Activated T-helper 2 cell treated with anti-CD3 and anti-CD28 coated beads, Interferon-gamma antibody, Interleukin-2, Interleukin-4, amounts not matched to agents 10 μg/mL and 5 μg/mL and 100 μg/mL, durations not matched to agents 14 hours and 24 hours and 36 hours (primary cell): ENCODE measurements at regions of chr12 and their contacts with region 1.

Region 1: GRCh38 chr12:120725659-120726509 is at the start of gene ACADS:
- DNase-seq: peak; percentile 87
- H3K4me3 Mint-ChIP-seq: peak within 1 kb of the TSS; percentile 96
- H3K27ac Mint-ChIP-seq: peak within 1 kb of the TSS; percentile 79
- H3K4me1 Mint-ChIP-seq: peaks cover 20% of the 10 kb centered on the region
- H3K27me3 Mint-ChIP-seq: no peaks in the 10 kb centered on the region
- total RNA-seq, gene ACADS: 16.4 and 16.6 TPM in 2 replicates

Region 2: GRCh38 chr12:120710031-120710804 is 15.7 kb before region 1 on chr12 and contains the start of gene UNC119B:
- intact Hi-C with region 1: loop called (anchors 1 kb)
- DNase-seq: peak; percentile 66
- H3K4me3 Mint-ChIP-seq: peak within 1 kb of the TSS; percentile 88
- H3K27ac Mint-ChIP-seq: peak within 1 kb of the TSS; percentile 82
- H3K4me1 Mint-ChIP-seq: peaks cover 29% of the 10 kb centered on the region
- H3K27me3 Mint-ChIP-seq: no peaks in the 10 kb centered on the region
- total RNA-seq, gene UNC119B: 25.1 and 27.0 TPM in 2 replicates

Region 3: GRCh38 chr12:120761519-120761934 is 35.6 kb after region 1 on chr12:
- intact Hi-C with region 1: loop called (anchors 5 kb)
- DNase-seq: no peak
- H3K4me3 Mint-ChIP-seq: no peak overlapping the region
- H3K27ac Mint-ChIP-seq: no peak overlapping the region
- H3K4me1 Mint-ChIP-seq: peaks cover 2% of the 10 kb centered on the region
- H3K27me3 Mint-ChIP-seq: no peaks in the 10 kb centered on the region

Region 4: GRCh38 chr12:120783197-120783596 is 57.3 kb after region 1 on chr12:
- intact Hi-C with region 1: no loop called
- DNase-seq: no peak
- H3K4me3 Mint-ChIP-seq: no peak overlapping the region
- H3K27ac Mint-ChIP-seq: peak overlapping the region; percentile 51
- H3K4me1 Mint-ChIP-seq: peaks cover 19% of the 10 kb centered on the region
- H3K27me3 Mint-ChIP-seq: no peaks in the 10 kb centered on the region

Region 5: DNA sequence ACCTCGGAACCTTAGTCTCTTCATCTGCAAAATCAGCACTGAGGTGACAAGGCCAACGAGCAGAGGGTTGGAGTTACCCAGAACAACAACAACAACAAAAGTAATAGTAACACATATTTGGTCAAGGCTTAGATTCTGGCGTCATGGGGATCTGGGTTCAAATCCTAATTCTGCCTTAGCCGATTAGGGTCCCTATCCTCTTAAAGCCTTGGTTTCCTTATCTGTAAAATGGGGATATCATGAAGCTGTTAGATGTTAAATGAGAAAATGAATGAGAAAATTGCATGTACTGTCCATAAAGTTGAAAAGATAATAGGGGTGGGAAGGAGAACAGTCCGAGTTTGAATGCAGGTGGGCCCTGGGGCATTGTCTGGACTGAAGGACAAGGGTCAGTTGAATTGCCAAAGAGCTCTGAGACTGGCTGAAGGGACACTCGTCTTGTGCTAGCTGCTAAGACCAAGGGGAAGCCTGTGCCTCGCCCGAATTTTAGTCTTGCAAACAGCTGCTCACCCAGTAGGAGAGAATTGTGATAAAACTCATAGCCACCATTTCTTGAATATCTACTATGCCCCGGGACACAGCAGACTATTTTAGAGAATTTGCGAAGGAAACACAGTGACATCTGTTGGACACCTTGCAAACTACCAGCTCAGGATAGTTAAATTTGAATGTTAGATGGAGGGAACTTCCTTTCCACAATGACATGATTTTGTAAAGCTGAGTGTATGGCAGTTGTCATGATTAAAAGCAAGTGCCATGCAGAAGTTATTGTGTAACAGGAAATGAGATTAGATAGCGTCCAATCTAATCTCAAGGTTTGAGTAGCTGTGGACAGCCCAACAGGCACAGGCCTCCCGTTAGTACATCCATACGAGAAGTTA is 245.7 kb after region 1 on chr12:
- intact Hi-C with region 1: loop called (anchors 10 kb)
- DNase-seq: peak; percentile 24
- H3K4me3 Mint-ChIP-seq: no peak overlapping the region
- H3K27ac Mint-ChIP-seq: no peak overlapping the region
- H3K4me1 Mint-ChIP-seq: peaks cover 5% of the 10 kb centered on the region
- H3K27me3 Mint-ChIP-seq: no peaks in the 10 kb centered on the region

Region 6: DNA sequence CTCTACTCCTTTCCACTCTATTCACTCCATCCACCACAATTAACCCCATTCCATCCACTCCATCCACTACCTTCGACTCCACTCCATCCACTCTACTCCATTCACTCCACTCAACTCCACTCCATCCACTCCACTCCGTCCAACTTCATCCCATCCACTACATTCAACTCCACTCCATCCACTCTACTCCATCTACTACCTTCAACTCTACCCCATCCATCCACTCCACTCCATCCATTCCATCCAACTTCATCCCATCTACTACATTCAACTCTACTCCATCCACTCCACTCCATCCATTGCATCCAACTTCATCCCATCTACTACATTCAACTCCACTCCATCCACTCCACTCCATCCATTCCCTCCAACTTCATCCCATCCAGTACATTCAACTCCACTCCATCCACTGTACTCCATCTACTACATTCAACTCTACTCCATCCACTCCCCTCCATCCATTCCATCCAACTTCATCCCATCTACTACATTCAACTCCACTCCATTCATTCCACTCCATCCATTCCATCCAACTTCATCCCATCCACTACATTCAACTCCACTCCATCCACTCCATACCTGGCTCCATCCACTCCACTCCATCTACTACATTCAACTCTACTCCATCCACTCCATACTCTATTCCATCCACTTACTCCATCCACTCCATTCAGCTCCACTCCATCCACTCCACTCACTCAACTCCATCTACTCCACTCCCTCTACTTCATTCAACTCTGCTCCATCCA is 268.9 kb after region 1 on chr12:
- intact Hi-C with region 1: no loop called
- DNase-seq: no peak
- H3K4me3 Mint-ChIP-seq: no peak overlapping the region
- H3K27ac Mint-ChIP-seq: no peak overlapping the region
- H3K4me1 Mint-ChIP-seq: no peaks in the 10 kb centered on the region
- H3K27me3 Mint-ChIP-seq: peaks cover 18% of the 10 kb centered on the region